Natural killer cell (primary cell): ENCODE measurements at regions of chr2 and their contacts with region 1.

Region 1: DNA sequence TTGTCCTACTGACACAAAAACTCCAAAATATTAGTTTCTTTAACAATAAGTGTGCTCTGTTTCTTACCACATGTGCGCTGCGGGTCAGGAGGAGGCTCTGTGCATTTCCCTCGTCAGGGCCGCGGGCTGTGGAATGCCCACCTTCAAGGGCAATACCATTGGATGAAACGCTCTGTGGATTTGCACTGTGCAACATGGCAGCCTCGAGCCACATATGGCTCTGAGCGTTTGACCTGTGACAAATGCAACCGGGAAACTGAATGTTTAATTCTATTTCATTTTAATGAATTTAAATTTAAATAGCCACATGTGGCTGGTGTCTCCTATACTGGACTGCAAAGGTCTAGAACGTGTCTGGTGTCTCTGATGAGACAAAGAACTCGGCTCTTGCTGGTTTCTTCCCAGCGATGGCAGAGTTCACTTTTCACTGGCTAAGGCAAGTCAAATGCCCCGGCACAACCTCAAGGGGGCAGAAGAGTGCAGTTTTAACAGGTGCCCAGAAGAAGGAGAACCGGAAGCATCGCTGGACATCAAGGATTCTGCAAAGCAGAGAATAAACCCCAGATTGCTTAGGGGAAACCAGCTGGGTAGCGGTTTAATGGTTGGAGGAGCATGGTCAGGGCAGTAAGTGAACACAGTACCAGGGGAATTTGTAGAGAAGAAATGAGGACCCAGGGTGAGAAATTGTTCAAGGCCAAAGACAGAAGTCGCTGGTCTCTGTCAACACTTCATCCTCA is 37.0 kb upstream of the TMEM18 start:
- DNase-seq: peak in 1 of 2 donors; percentile 54
- ATAC-seq: peak in 2 of 3 donors; percentile 66 to 71
- H3K4me3 ChIP-seq: no peak overlapping the region
- H3K4me3 Mint-ChIP-seq: no peak overlapping the region
- H3K27ac ChIP-seq: no peak overlapping the region
- H3K27ac Mint-ChIP-seq: no peak overlapping the region
- H3K4me1 ChIP-seq: no peaks in the 10 kb centered on the region
- H3K4me1 Mint-ChIP-seq: peaks cover 5% of the 10 kb centered on the region in 2 donors
- H3K27me3 ChIP-seq: peaks cover 3% of the 10 kb centered on the region
- H3K27me3 Mint-ChIP-seq: peaks cover 47 to 52% of the 10 kb centered on the region in 2 donors
- CTCF ChIP-seq: peak; percentile 59

Region 2: DNA sequence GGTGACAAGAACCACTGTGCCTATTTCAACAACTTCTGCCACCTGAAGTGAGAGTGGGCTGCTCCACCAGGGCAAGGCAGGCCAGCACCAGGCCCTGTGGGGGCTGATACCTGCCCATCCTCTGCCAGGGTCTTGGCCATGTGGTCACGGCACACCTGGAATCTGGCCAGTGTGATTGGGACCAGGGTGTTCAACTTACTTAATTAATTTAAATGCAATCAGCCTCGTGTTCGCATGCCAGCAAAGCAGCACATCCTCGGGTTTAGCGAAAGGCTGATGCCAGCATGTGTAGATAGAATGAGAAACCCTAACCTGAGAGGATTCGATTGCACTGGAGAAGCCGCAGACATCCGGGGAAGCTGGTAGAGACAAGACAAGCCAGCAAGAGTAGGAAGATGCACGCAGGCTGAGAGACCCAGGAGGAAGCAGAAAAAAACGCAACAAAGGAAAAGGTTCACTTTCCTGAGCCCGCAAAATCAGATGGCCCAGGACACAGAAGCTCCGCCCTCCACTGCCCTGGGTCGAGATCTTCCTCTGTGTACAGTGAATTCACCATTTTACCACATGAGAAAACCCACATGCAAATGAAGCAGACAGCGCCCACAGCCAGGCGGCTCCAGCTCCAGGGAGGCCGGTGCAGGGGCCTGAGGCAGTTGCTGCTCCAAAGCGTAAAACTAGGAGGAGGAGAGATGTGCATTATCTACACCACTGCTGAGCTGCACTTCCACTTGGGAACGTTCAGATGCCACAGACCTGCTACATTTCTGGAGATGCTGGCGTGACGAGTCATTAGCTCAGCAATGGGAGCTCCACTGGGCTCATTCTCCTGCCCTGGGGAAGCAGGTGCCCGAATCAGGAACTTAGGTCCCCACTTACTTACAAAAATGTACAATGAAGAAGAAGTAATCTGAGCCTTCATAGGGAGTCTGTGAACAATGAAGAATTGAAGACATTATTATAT is 129.0 kb before region 1 on chr2:
- intact Hi-C with region 1: no loop called
- DNase-seq: peak; percentile 23 to 67
- ATAC-seq: peak; percentile 84 to 98 (median 96)
- H3K4me3 ChIP-seq: no peak overlapping the region
- H3K4me3 Mint-ChIP-seq: peak overlapping the region; percentile 53
- H3K27ac ChIP-seq: no peak overlapping the region
- H3K27ac Mint-ChIP-seq: peak overlapping the region in 1 of 2 donors; percentile 53
- H3K4me1 ChIP-seq: peaks cover 17% of the 10 kb centered on the region
- H3K4me1 Mint-ChIP-seq: peaks cover 11% of the 10 kb centered on the region in 2 donors
- H3K27me3 ChIP-seq: peaks cover 8% of the 10 kb centered on the region
- H3K27me3 Mint-ChIP-seq: peaks cover 34 to 41% of the 10 kb centered on the region in 2 donors
- CTCF ChIP-seq: no peak

Region 3: DNA sequence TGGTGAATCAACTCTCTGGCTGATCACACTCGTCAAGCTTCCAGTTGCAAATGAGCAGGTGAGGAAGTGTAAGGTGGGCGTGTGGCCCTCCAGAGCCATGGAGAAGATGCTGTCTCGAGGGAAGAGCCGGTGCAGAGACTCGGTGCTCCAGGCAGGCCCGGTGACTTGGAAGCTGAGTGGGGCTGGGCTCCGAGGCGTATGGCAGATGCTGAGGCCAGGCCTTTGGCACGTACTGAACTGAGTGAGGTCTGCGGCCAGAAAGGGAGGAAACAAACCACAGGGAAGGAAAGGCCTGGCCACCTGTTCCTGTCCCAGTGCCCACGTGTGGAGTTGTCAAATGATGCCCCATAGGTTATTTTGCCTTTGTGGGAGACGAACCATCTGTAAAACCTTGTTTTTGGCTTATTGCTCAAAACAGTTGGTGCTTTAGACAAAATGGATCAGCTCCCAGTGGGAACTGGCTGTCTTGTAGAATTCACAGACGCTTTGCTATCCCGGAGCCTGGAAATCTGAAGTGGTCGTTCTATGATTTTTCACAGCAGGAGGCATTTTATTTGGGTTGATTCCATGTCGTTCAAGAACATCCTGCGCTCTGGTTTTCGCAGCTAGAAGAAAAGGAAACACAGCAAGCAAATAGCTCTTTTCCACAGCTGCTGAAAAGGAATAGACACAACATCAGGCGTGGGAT is 80.5 kb after region 1 on chr2:
- intact Hi-C with region 1: no loop called
- DNase-seq: no peak
- ATAC-seq: no peak
- H3K4me3 ChIP-seq: no peak overlapping the region
- H3K4me3 Mint-ChIP-seq: no peak overlapping the region
- H3K27ac ChIP-seq: no peak overlapping the region
- H3K27ac Mint-ChIP-seq: no peak overlapping the region
- H3K4me1 ChIP-seq: no peaks in the 10 kb centered on the region
- H3K4me1 Mint-ChIP-seq: no peaks in the 10 kb centered on the region
- H3K27me3 ChIP-seq: no peaks in the 10 kb centered on the region
- H3K27me3 Mint-ChIP-seq: peaks cover 5 to 11% of the 10 kb centered on the region in 2 donors
- CTCF ChIP-seq: no peak

Region 4: DNA sequence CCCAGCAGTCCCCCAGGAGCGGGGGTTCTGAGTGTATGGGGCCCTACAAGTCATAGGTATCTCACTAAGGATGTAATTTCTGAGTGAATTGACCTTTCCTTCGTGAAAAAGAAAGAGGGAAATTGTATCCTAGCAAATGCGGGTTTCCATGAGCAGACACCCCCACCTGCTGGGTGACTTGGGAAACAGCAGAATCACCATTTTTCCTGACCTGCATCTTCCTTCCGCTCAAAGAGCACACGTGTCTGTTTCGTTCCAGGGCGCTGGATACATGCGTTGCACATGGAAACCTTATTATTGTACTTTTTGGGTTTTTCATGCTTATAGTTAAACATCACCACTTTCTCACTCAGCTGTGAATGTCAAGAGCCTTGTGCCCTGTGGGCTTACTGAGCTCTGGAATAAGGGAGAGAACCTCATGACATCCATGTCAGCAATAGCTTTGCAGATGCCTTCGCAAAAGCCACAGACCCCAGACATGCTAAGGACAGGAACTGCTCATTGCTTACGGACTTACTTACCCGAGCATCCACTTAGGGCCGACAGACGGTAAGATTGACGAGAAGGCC is 831.9 kb after region 1 on chr2:
- intact Hi-C with region 1: loop called (anchors 5 kb)
- DNase-seq: peak in 1 of 2 donors; percentile 59
- ATAC-seq: no peak
- H3K4me3 ChIP-seq: no peak overlapping the region
- H3K4me3 Mint-ChIP-seq: no peak overlapping the region
- H3K27ac ChIP-seq: no peak overlapping the region
- H3K27ac Mint-ChIP-seq: no peak overlapping the region
- H3K4me1 ChIP-seq: peaks cover 8% of the 10 kb centered on the region
- H3K4me1 Mint-ChIP-seq: peaks cover 6 to 12% of the 10 kb centered on the region in 2 donors
- H3K27me3 ChIP-seq: peaks cover 3% of the 10 kb centered on the region
- H3K27me3 Mint-ChIP-seq: peaks cover 6 to 9% of the 10 kb centered on the region in 2 donors
- CTCF ChIP-seq: peak; percentile 28

Region 5: DNA sequence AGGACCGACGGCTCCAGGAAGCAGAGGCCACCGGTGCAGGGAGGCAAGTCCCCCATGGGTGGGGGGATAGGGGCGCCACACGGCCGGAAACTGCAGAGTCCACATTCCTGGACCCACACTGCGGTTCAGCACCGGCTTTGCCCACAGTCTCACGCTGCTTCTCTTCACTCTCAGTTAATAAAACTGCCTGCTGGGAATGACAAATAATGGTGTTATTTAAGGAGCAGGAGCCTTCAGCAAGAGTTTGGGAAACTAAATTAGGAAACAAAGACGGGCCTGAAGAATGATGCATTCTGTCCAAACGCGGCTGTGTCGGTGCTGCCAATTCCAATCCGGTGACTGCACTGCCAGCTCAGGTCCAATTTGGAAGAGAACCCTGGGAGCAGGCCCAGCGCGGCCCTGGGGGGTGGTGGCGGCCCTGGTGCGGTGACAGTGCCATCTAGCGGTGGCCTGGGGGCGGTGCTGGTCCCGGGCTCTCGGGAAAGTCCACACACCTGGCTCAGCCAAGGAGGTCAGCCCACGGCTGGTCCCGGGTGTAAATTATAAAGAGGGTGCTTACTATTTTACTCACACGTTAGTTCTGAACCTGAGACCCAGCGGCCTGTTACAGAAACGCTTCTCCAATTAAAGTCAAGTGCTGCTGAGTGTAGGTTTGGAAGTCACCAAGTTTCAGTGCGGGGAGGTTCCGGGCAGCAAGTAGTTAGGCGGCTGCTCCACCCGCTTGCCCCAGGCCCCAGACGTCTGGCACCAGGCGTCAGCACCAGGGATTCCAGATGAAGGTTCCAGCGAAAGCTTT is 1103.3 kb after region 1 on chr2:
- intact Hi-C with region 1: loop called (anchors 5 kb)
- DNase-seq: peak; percentile 55 to 60
- ATAC-seq: peak; percentile 74 to 98 (median 91)
- H3K4me3 ChIP-seq: no peak overlapping the region
- H3K4me3 Mint-ChIP-seq: no peak overlapping the region
- H3K27ac ChIP-seq: no peak overlapping the region
- H3K27ac Mint-ChIP-seq: no peak overlapping the region
- H3K4me1 ChIP-seq: peaks cover 4% of the 10 kb centered on the region
- H3K4me1 Mint-ChIP-seq: peaks cover 0 to 7% of the 10 kb centered on the region in 2 donors
- H3K27me3 ChIP-seq: no peaks in the 10 kb centered on the region
- H3K27me3 Mint-ChIP-seq: peaks cover 0 to 3% of the 10 kb centered on the region in 2 donors
- CTCF ChIP-seq: peak; percentile 81